ENCODE measurements at regions of chr1 and their contacts with region 1.

Region 1: DNA sequence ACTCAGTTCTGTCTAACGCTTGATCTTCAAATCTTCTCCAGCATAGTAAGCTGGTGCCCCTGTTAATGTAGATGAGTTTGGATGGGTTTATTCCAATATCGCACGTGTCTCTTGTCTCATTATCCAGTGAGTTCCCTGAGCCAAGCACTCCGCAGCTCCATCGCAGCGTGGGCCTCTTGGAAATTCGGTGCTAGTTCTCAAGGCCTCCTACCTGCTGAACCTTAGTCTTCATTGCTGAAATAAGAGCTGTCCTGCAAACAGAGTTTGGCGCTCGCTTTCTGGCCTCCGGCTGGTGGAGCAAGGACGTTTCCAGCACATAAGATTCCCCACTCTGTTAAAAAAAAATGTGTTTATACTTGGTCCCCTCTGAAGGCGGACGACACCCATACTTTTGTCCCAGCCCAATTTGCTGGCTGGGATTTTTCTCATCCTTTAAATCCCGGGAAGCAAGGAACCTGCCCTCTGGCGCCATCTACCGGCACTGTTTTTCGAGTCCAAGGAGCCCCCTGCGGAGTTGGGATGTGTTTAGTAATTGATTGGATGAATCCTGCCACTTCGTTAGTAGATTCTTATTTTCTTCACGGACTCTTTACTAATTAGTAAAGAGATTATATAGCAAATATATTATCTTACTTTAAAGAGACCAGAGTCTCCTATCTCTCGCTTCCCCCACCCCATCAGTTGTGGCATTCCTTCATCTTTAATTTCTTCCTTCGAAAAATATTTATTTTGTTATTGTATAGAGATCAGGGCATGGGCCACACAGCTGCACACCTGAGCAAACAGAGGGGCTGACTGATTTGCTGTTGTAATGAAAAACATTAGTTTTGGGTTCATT is 14.7 kb downstream of the JUN start:
- DNase-seq: no peak
- H3K4me3 ChIP-seq: no peak overlapping the region
- H3K4me3 Mint-ChIP-seq: no peak overlapping the region
- H3K27ac ChIP-seq: no peak overlapping the region
- H3K27ac Mint-ChIP-seq: no peak overlapping the region
- H3K4me1 ChIP-seq: peaks cover 6% of the 10 kb centered on the region
- H3K4me1 Mint-ChIP-seq: peaks cover 0 to 11% (median 8%) of the 10 kb centered on the region in 4 donors
- H3K27me3 ChIP-seq: no peaks in the 10 kb centered on the region
- H3K27me3 Mint-ChIP-seq: peaks cover 1 to 2% of the 10 kb centered on the region in 2 donors

Region 2: DNA sequence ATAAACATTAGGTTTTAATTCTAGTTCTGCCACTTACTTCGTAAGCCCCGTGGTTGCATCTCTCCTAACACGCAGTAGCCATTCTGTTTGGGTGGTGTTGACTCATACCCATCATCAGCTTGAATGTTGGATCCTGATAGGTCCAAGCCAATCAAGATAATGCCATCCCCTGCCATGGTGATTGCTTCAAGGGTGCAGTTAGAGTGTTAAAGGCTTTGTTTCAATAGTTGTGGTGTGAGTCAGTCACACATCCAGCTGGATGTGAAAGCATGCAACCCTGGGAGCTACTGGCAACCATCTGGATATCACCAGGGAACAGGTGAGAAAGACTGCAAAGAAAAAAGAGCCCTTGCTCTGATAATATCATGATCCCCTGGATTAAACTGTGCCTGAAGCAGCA is 291.8 kb before region 1 on chr1:
- CTCF ChIA-PET with region 1: no interaction called
- POLR2A ChIA-PET with region 1: no interaction called
- intact Hi-C with region 1: no loop called
- DNase-seq: no peak
- H3K4me3 ChIP-seq: no peak overlapping the region
- H3K4me3 Mint-ChIP-seq: no peak overlapping the region
- H3K27ac ChIP-seq: no peak overlapping the region
- H3K27ac Mint-ChIP-seq: no peak overlapping the region
- H3K4me1 ChIP-seq: no peaks in the 10 kb centered on the region
- H3K4me1 Mint-ChIP-seq: peaks cover 0 to 2% (median under 1%) of the 10 kb centered on the region in 4 donors
- H3K27me3 ChIP-seq: no peaks in the 10 kb centered on the region
- H3K27me3 Mint-ChIP-seq: no peaks in the 10 kb centered on the region

Region 3: GRCh38 chr1:58755468-58755872 is 13.7 kb before region 1 on chr1:
- CTCF ChIA-PET with region 1: interaction called, 24 read pairs
- POLR2A ChIA-PET with region 1: interaction called, 5 read pairs
- intact Hi-C with region 1: no loop called
- DNase-seq: peak; percentile 22 to 79 (median 28)
- H3K4me3 ChIP-seq: peak overlapping the region in 1 of 2 donors; percentile 9
- H3K4me3 Mint-ChIP-seq: peak overlapping the region; percentile 27 to 84 (median 72)
- H3K27ac ChIP-seq: peak overlapping the region; percentile 13
- H3K27ac Mint-ChIP-seq: peak overlapping the region; percentile 13 to 89 (median 69)
- H3K4me1 ChIP-seq: peaks cover 35% of the 10 kb centered on the region
- H3K4me1 Mint-ChIP-seq: peaks cover 35 to 57% (median 45%) of the 10 kb centered on the region in 4 donors
- H3K27me3 ChIP-seq: no peaks in the 10 kb centered on the region
- H3K27me3 Mint-ChIP-seq: no peaks in the 10 kb centered on the region

Region 4: GRCh38 chr1:58791106-58791505 is 21.9 kb after region 1 on chr1:
- CTCF ChIA-PET with region 1: no interaction called
- POLR2A ChIA-PET with region 1: no interaction called
- intact Hi-C with region 1: no loop called
- DNase-seq: no peak
- H3K4me3 ChIP-seq: no peak overlapping the region
- H3K4me3 Mint-ChIP-seq: no peak overlapping the region
- H3K27ac ChIP-seq: no peak overlapping the region
- H3K27ac Mint-ChIP-seq: no peak overlapping the region
- H3K4me1 ChIP-seq: peaks cover 6% of the 10 kb centered on the region
- H3K4me1 Mint-ChIP-seq: peaks cover 29 to 58% (median 42%) of the 10 kb centered on the region in 4 donors
- H3K27me3 ChIP-seq: no peaks in the 10 kb centered on the region
- H3K27me3 Mint-ChIP-seq: no peaks in the 10 kb centered on the region

Measured in CD4-positive, alpha-beta memory T cell (primary cell).